ENCODE measurements at regions of chr10 and their contacts with region 1.

Region 1: DNA sequence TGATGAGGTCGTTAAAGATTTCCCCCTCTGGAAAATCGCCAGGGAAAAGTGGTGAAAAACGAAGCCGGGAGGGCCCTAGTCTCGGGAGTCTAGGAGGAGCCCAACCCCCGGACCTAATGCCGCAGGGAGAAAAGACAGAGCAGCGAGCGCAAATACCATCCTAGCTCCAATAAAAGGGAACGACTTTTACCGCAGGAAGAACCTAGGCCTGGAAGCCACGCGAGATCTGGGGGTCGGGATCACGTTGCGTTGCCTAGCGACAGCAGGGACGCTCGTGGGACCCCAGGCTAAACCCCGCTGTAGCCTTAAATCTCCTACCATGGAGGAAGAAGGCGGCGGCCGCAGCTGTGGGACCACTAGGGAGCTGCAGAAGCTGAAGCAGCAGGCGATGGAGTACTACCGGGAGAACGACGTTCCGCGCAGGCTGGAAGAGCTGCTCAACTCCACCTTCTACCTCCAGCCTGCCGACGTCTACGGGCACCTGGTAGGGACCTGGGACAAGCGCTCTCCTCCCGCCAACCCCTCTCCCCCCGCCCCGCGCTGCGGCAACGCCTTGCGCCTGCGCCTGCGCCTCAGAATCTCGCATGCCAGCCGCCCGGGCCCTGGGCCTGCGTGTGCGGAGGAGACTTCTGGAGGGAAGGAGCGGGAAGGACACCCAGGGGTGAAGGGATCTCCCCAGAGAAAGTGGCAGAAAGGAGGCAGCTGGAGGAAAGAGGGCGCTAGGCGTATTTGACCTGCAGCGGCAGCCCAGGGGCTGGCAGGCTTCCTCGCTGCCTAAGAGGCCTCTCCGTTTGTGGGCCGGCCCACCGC is at the start of gene ENO4:
- DNase-seq: peak; percentile 89
- H3K4me3 Mint-ChIP-seq: peak within 1 kb of the TSS; percentile 90
- H3K27ac Mint-ChIP-seq: peak within 1 kb of the TSS; percentile 95
- H3K4me1 Mint-ChIP-seq: peaks cover 29% of the 10 kb centered on the region
- H3K27me3 Mint-ChIP-seq: no peaks in the 10 kb centered on the region
- CTCF ChIP-seq: no peak
- total RNA-seq, gene ENO4: 0.15 TPM in 1 of 2 replicates, not detected in the other

Region 2: DNA sequence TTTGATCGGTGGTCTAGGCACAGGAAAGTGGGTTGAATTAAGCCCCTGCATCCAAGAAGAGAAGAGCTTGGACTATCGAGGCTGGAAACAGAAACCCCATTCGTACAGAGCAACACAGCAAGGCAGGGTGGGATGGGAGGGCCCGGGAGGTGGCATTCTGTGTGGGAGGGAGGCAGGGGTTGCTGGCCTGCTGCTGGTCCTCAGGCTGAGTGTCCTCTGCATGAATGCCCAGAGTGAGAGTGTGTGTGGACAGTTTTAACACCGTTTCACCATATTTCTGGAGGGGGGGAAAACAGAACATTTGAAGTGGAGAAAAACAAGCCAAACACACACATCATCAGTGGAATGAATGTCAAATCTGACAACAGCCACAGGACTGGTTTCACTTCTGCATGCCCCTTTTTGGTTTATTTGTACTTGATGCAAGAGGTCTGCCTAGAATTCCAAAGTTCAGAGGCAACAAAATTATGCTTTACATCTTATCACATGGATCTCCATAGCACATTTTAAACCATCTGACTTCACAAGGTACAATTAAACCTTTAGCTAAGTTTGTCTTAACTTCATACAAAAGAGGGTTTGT is 11.2 kb before region 1 on chr10:
- CTCF ChIA-PET with region 1: interaction called, 3 read pairs
- POLR2A ChIA-PET with region 1: interaction called, 17 read pairs
- intact Hi-C with region 1: no loop called
- DNase-seq: no peak
- H3K4me3 Mint-ChIP-seq: no peak overlapping the region
- H3K27ac Mint-ChIP-seq: no peak overlapping the region
- H3K4me1 Mint-ChIP-seq: no peaks in the 10 kb centered on the region
- H3K27me3 Mint-ChIP-seq: no peaks in the 10 kb centered on the region
- CTCF ChIP-seq: no peak

Region 3: GRCh38 chr10:116888380-116889055 is 39.1 kb after region 1 on chr10:
- CTCF ChIA-PET with region 1: interaction called, 4 read pairs
- POLR2A ChIA-PET with region 1: interaction called, 24 read pairs
- intact Hi-C with region 1: loop called (anchors 5 kb)
- DNase-seq: peak; percentile 93
- H3K4me3 Mint-ChIP-seq: peak overlapping the region; percentile 16
- H3K27ac Mint-ChIP-seq: no peak overlapping the region
- H3K4me1 Mint-ChIP-seq: peaks cover 27% of the 10 kb centered on the region
- H3K27me3 Mint-ChIP-seq: no peaks in the 10 kb centered on the region
- CTCF ChIP-seq: no peak